Activated naive CD4-positive, alpha-beta T cell treated with anti-CD3 and anti-CD28 coated beads for 36 hours (primary cell): ENCODE measurements at regions of chr5 and their contacts with region 1.

Region 1: GRCh38 chr5:109945097-109945678 is 255.5 kb downstream of the MAN2A1 start:
- DNase-seq: peak; percentile 62
- H3K4me3 Mint-ChIP-seq: no peak overlapping the region
- H3K27ac Mint-ChIP-seq: peak overlapping the region; percentile 19
- H3K4me1 Mint-ChIP-seq: peaks cover 22% of the 10 kb centered on the region
- H3K27me3 Mint-ChIP-seq: no peaks in the 10 kb centered on the region

Region 2: GRCh38 chr5:109961751-109962150 is 16.6 kb after region 1 on chr5:
- CTCF ChIA-PET with region 1: no interaction called
- intact Hi-C with region 1: loop called (anchors 1 kb)
- DNase-seq: no peak
- H3K4me3 Mint-ChIP-seq: no peak overlapping the region
- H3K27ac Mint-ChIP-seq: no peak overlapping the region
- H3K4me1 Mint-ChIP-seq: peaks cover 27% of the 10 kb centered on the region
- H3K27me3 Mint-ChIP-seq: no peaks in the 10 kb centered on the region

Region 3: DNA sequence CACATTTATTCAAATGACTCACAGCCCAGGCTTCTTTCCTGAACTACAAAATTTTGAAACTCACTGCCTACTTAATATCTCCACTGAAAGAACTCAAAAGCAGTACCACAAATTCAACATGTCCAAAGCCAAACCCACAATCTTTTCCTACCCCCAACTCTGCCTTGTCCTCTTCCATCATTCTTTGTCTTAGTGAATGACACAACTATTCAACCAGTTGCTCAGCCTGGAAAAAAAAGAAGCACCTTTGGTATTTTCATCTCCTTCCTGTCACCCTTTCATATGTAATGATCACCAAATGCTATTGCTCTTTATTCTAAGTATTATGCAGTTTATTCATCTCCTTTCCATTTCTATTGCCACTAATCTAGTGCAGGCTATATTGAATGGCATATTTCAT is 565.0 kb after region 1 on chr5:
- CTCF ChIA-PET with region 1: no interaction called
- intact Hi-C with region 1: no loop called
- DNase-seq: no peak
- H3K4me3 Mint-ChIP-seq: no peak overlapping the region
- H3K27ac Mint-ChIP-seq: no peak overlapping the region
- H3K4me1 Mint-ChIP-seq: no peaks in the 10 kb centered on the region
- H3K27me3 Mint-ChIP-seq: peaks cover 8% of the 10 kb centered on the region